ENCODE measurements at regions of chr9 and their contacts with region 1.

Region 1: GRCh38 chr9:82260691-82261090 is 272.1 kb downstream of the SPATA31D1 start:
- DNase-seq: no peak
- H3K4me3 ChIP-seq: no peak overlapping the region
- H3K27ac ChIP-seq: no peak overlapping the region
- H3K4me1 ChIP-seq: no peaks in the 10 kb centered on the region
- H3K27me3 ChIP-seq: no peaks in the 10 kb centered on the region
- CTCF ChIP-seq: no peak

Region 2: GRCh38 chr9:82130331-82131042 is 130.2 kb before region 1 on chr9:
- CTCF ChIA-PET with region 1: interaction called, 10 read pairs
- POLR2A ChIA-PET with region 1: no interaction called
- intact Hi-C with region 1: no loop called
- DNase-seq: no peak
- H3K4me3 ChIP-seq: no peak overlapping the region
- H3K27ac ChIP-seq: no peak overlapping the region
- H3K4me1 ChIP-seq: no peaks in the 10 kb centered on the region
- H3K27me3 ChIP-seq: no peaks in the 10 kb centered on the region
- CTCF ChIP-seq: no peak

Region 3: GRCh38 chr9:82524407-82524806 is 263.7 kb after region 1 on chr9:
- CTCF ChIA-PET with region 1: no interaction called
- POLR2A ChIA-PET with region 1: no interaction called
- intact Hi-C with region 1: no loop called
- DNase-seq: no peak
- H3K4me3 ChIP-seq: no peak overlapping the region
- H3K27ac ChIP-seq: no peak overlapping the region
- H3K4me1 ChIP-seq: no peaks in the 10 kb centered on the region
- H3K27me3 ChIP-seq: no peaks in the 10 kb centered on the region
- CTCF ChIP-seq: no peak